ENCODE measurements at regions of chr2 and their contacts with region 1.

Region 1: GRCh38 chr2:38581193-38582147 is 21.3 kb downstream of the HNRNPLL start:
- DNase-seq: peak; percentile 31
- ATAC-seq: peak; percentile 90
- H3K4me3 Mint-ChIP-seq: no peak overlapping the region; the same call in 1 of the 2 replicates
- H3K27ac Mint-ChIP-seq: peak overlapping the region; percentile 84
- H3K4me1 Mint-ChIP-seq: peaks cover 42% of the 10 kb centered on the region
- H3K27me3 Mint-ChIP-seq: no peaks in the 10 kb centered on the region
- CTCF ChIP-seq: peak; percentile 53; the same call in 1 of the 2 replicates

Region 2: DNA sequence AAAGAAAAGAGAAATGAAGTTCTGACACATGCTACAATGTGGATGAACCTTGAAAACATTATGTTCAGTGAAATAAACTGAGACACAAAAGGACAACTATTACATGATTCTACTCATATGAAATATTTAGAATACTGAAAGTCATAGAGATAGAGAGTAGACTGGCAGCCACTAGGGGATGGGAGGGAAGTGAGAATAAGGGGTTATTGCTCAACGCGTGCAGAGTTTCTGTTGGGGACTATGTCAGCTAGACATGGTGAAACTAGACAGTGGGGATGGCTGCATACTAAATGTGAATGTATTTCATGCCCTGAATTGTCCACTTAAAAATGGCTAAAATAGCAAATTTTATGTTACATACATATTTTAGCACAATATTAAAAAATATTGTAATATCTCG is 95.7 kb before region 1 on chr2:
- CTCF ChIA-PET with region 1: no interaction called
- POLR2A ChIA-PET with region 1: no interaction called
- DNase-seq: no peak
- ATAC-seq: no peak
- H3K4me3 Mint-ChIP-seq: no peak overlapping the region
- H3K27ac Mint-ChIP-seq: no peak overlapping the region
- H3K4me1 Mint-ChIP-seq: peaks cover 13% of the 10 kb centered on the region
- H3K27me3 Mint-ChIP-seq: no peaks in the 10 kb centered on the region
- CTCF ChIP-seq: no peak

Region 3: GRCh38 chr2:38535744-38536506 is 45.5 kb before region 1 on chr2:
- CTCF ChIA-PET with region 1: interaction called, 11 read pairs
- POLR2A ChIA-PET with region 1: no interaction called
- DNase-seq: peak; percentile 92
- ATAC-seq: peak; percentile 91
- H3K4me3 Mint-ChIP-seq: peak overlapping the region; percentile 58
- H3K27ac Mint-ChIP-seq: no peak overlapping the region
- H3K4me1 Mint-ChIP-seq: peaks cover 19% of the 10 kb centered on the region
- H3K27me3 Mint-ChIP-seq: peaks cover 19% of the 10 kb centered on the region
- CTCF ChIP-seq: peak; percentile 87

Region 4: DNA sequence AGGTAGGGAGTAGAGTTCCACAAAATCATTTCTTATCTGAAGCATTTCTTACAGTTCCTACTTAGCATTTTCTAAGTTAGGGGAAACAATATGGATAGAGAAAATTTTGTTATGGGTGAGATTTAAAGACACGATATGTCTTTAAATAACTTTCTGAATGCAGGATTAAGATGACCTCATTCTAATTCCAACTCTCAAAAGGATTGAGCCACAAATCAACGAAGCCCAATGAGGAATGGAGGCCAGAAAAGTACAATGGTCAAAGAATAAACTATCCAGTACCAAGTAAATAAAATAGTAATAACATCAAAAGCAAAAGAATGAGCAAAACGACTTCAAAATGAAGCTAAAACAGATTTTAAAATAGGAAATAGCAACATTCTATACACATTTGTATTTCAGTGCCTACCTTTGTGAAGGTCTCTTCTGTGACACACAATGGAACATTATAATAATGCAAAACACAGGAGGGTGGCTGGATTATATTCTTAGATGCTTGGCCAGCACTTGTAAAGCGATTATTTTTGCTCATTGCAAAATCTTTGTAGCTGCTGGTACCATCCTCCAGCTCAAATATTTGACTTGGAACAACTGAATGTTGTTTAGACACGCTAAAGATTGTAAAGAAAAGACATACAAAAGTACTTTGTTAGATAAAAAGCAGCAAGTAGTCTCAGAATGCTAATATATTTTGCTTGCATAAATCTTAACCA is 12.6 kb before region 1 on chr2:
- CTCF ChIA-PET with region 1: interaction called, 21 read pairs
- POLR2A ChIA-PET with region 1: no interaction called
- DNase-seq: no peak
- ATAC-seq: no peak
- H3K4me3 Mint-ChIP-seq: no peak overlapping the region
- H3K27ac Mint-ChIP-seq: no peak overlapping the region
- H3K4me1 Mint-ChIP-seq: no peaks in the 10 kb centered on the region
- H3K27me3 Mint-ChIP-seq: no peaks in the 10 kb centered on the region
- CTCF ChIP-seq: no peak

Region 5: GRCh38 chr2:38608755-38609154 is 27.3 kb after region 1 on chr2:
- CTCF ChIA-PET with region 1: interaction called, 27 read pairs
- POLR2A ChIA-PET with region 1: interaction called, 16 read pairs
- DNase-seq: no peak
- ATAC-seq: no peak
- H3K4me3 Mint-ChIP-seq: no peak overlapping the region
- H3K27ac Mint-ChIP-seq: no peak overlapping the region
- H3K4me1 Mint-ChIP-seq: peaks cover 20% of the 10 kb centered on the region
- H3K27me3 Mint-ChIP-seq: no peaks in the 10 kb centered on the region
- CTCF ChIP-seq: no peak

Region 6: DNA sequence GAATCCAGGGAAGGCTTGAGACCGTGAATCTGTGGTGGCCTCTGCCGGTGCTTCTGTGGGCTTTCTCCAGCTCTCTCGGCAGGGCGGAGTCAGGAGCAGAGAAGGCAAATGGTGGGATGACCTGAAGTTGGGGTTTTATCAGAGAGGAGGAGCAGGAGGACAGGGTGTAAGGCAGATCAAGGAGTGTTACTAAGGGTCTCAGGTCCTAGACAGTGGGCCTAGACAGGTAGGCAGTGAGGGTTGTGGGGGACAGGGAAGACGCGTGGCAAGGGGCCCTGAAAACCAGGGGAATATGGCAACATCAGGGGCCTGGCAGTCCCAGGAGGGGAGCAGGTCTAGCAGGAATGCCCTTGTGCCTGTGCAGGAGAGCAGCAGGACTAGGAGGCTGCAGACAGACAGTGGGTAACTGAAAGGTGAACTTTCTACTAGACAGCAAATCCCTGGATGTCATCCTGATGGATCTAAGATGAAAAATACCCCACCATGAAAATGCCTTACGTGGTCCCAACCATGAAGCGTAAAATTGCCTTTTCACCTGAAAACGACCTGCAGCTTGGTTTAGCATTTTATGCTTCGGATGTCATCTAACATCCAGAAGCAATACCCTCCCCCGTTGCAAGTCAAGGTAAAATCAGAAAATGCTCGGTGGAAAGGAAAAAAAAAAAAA is 127.6 kb after region 1 on chr2:
- CTCF ChIA-PET with region 1: interaction called, 14 read pairs
- POLR2A ChIA-PET with region 1: no interaction called
- DNase-seq: no peak
- ATAC-seq: peak; percentile 66
- H3K4me3 Mint-ChIP-seq: no peak overlapping the region
- H3K27ac Mint-ChIP-seq: peak overlapping the region; percentile 91
- H3K4me1 Mint-ChIP-seq: peaks cover 16% of the 10 kb centered on the region
- H3K27me3 Mint-ChIP-seq: no peaks in the 10 kb centered on the region
- CTCF ChIP-seq: no peak

Region 7: DNA sequence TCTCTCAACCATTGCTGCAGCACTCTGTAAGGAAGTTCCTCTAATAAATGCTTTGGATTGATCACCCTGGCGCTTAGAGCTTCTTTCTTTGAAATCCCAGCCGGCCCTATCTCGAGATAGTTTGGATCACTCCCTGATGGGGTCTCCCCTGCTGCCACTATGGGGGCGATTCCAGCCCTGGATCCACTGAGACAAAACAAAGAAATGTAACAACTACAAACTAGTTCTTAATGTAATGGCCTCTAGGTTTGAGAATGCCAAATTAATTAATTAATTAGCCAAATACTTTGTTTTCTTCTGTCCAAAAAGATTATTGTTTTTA is 154.5 kb after region 1 on chr2:
- CTCF ChIA-PET with region 1: interaction called, 13 read pairs
- POLR2A ChIA-PET with region 1: interaction called, 4 read pairs
- DNase-seq: no peak
- ATAC-seq: no peak
- H3K4me3 Mint-ChIP-seq: no peak overlapping the region
- H3K27ac Mint-ChIP-seq: no peak overlapping the region
- H3K4me1 Mint-ChIP-seq: peaks cover 22% of the 10 kb centered on the region
- H3K27me3 Mint-ChIP-seq: peaks cover 3% of the 10 kb centered on the region; the same call in 1 of the 2 replicates
- CTCF ChIP-seq: no peak

Region 8: DNA sequence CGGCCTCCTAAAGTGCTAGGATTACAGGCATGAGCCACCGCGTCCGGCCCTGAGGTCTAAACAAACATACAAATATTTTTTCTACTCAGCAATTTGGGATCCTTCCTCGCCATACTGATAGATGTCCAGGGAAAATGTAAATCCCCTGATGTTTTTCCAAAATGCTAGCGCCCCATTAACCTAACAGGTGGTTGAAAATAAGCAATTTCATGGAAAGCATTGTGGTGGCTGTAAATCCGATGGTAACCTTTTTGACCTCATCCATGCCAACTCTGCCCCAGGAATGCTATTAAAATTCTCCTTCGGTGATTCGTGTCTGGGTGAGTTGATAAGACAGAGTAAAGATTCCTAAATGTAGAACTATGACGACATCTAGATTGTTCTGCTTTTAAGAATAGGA is 215.8 kb after region 1 on chr2:
- CTCF ChIA-PET with region 1: no interaction called
- POLR2A ChIA-PET with region 1: no interaction called
- DNase-seq: no peak
- ATAC-seq: no peak
- H3K4me3 Mint-ChIP-seq: no peak overlapping the region
- H3K27ac Mint-ChIP-seq: no peak overlapping the region
- H3K4me1 Mint-ChIP-seq: no peaks in the 10 kb centered on the region
- H3K27me3 Mint-ChIP-seq: no peaks in the 10 kb centered on the region
- CTCF ChIP-seq: no peak